Activated CD4-positive, alpha-beta memory T cell treated with anti-CD3 and anti-CD28 coated beads for 36 hours (primary cell): ENCODE measurements at regions of chr7 and their contacts with region 1.

Region 1: DNA sequence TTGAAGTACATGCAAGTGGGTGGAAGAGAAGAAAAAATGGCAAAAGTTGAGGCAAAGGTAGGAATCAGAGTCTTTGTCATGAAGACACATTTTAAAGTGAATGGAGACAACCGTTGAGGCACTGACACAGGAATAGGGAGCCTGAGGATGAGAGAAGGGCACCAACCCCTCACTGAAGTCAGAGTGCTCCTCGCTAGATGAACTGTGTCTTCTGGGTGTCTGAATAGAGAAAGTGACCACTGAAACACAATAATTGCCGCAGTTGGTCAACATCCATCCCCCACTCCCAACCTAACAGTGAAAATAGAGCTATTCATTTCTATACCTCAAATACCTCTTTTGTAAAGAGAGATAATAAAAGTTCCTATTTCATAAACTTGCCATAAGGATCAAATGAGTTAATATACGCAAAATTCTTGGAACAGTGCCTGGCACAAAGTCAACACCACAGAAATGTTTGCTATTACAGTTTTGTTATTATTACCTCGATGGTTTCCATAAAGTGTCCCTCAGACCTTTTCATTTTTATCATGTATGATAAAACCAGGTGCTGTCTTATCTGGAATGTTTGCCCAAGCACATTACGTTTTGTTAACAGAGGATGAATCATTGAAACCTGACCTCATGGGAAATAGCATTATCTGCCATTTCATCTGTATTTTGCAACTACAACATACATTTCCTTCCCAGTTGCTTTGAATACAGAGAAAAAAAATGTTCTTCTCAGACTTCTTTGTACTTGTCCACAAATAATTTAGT is 61.8 kb upstream of the SP4 start:
- DNase-seq: no peak
- H3K4me3 Mint-ChIP-seq: no peak overlapping the region
- H3K27ac Mint-ChIP-seq: no peak overlapping the region
- H3K4me1 Mint-ChIP-seq: peaks cover 49% of the 10 kb centered on the region
- H3K27me3 Mint-ChIP-seq: peaks cover 3% of the 10 kb centered on the region

Region 2: GRCh38 chr7:21338728-21339164 is 27.3 kb before region 1 on chr7:
- CTCF ChIA-PET with region 1: interaction called, 3 read pairs
- POLR2A ChIA-PET with region 1: interaction called, 15 read pairs
- intact Hi-C with region 1: loop called (anchors 1 kb)
- DNase-seq: peak; percentile 79
- H3K4me3 Mint-ChIP-seq: peak overlapping the region; percentile 31
- H3K27ac Mint-ChIP-seq: peak overlapping the region; percentile 96
- H3K4me1 Mint-ChIP-seq: peaks cover 37% of the 10 kb centered on the region
- H3K27me3 Mint-ChIP-seq: no peaks in the 10 kb centered on the region

Region 3: DNA sequence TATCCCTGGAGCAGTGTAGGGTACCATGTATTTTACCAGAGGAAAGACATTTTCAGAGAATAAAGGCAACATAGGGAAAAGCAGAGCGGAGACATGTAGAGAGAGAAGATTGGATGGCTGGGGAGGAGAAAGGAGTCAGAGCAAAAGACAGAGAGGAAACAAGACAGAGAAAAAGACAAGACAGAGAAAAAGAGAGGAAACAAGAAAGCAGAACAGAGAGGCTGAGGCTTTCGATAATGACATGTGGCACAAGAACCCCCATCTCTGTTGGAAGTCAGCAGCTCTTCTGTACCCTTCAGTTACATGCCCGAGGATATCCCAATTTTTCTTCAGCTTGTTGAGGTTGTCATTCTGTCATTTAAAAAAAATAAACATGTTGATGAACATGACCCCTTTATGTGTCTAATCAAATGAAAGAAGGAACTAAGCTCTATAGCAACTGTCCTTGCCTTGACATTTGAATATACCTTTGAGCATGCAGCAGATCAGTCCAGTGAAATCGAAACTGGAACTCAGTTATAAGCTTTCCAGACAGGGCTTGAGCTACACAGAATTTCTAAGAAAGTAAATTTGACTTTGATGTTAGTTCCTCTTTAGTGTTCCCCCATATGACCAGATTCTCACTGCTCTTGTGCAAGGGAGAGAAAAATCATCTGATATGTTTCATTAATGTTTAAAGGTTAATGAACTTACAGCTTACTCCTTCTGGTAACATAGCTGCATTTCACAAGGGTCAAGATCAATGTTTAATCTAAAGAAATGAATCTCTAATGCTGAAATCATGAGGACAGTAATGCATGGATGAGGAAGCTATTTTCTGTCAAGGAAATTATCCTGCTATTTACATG is 13.3 kb before region 1 on chr7:
- CTCF ChIA-PET with region 1: interaction called, 8 read pairs
- POLR2A ChIA-PET with region 1: interaction called, 7 read pairs
- intact Hi-C with region 1: loop called (anchors 1 kb)
- DNase-seq: no peak
- H3K4me3 Mint-ChIP-seq: peak overlapping the region; percentile 39
- H3K27ac Mint-ChIP-seq: peak overlapping the region; percentile 77
- H3K4me1 Mint-ChIP-seq: peaks cover 55% of the 10 kb centered on the region
- H3K27me3 Mint-ChIP-seq: no peaks in the 10 kb centered on the region